Ovary (tissue), 10 donors: ENCODE measurements at regions of chr2 and their contacts with region 1.

Region 1: GRCh38 chr2:197130318-197130717 is 180.3 kb downstream of the ANKRD44 start:
- DNase-seq: no peak
- H3K4me3 ChIP-seq: no peak overlapping the region
- H3K27ac ChIP-seq: no peak overlapping the region
- H3K4me1 ChIP-seq: no peaks in the 10 kb centered on the region
- H3K27me3 ChIP-seq: no peaks in the 10 kb centered on the region
- CTCF ChIP-seq: no peak
- EP300 ChIP-seq: no peak
- POLR2A ChIP-seq: no peak

Region 2: DNA sequence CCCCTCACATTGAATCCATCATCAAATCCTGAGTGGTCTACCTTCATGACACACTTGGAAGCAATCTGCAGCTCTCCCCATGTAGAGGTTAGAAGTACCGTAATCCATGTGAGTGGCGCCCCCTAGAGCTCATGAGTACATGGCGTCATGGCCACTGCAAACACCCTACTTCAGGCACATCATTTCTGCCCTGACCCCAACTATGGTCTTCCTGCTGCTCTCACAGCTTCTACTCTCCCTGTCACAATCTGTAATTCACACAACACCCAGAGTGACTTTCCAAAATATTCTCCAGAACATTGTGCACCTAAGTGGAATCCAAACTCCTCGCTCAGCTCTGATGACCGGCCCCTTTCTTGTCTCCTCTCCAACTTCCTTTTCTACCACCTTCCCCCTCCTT is 38.4 kb after region 1 on chr2:
- intact Hi-C with region 1: loop called in 1 of 4 experiments (anchors 1 kb)
- DNase-seq: peak; percentile 29 to 68 (median 53)
- H3K4me3 ChIP-seq: no peak overlapping the region
- H3K27ac ChIP-seq: no peak overlapping the region
- H3K4me1 ChIP-seq: no peaks in the 10 kb centered on the region
- H3K27me3 ChIP-seq: no peaks in the 10 kb centered on the region
- CTCF ChIP-seq: peak in 2 of 3 donors; percentile 19 to 21
- EP300 ChIP-seq: no peak
- POLR2A ChIP-seq: no peak